ENCODE measurements at regions of chr3 and their contacts with region 1.

Region 1: GRCh38 chr3:23640475-23641146 is 165.1 kb upstream of the UBE2E1 start:
- DNase-seq: no peak
- H3K4me3 ChIP-seq: no peak overlapping the region
- H3K27ac ChIP-seq: no peak overlapping the region
- H3K4me1 ChIP-seq: no peaks in the 10 kb centered on the region
- H3K27me3 ChIP-seq: no peaks in the 10 kb centered on the region
- CTCF ChIP-seq: no peak

Region 2: GRCh38 chr3:23629181-23629893 is 11.3 kb before region 1 on chr3:
- CTCF ChIA-PET with region 1: no interaction called
- POLR2A ChIA-PET with region 1: no interaction called
- intact Hi-C with region 1: loop called (anchors 1 kb)
- DNase-seq: peak in 1 of 2 experiments; percentile 20
- H3K4me3 ChIP-seq: no peak overlapping the region
- H3K27ac ChIP-seq: peak overlapping the region; percentile 51; the same call in 1 of the 2 replicates
- H3K4me1 ChIP-seq: peaks cover 14% of the 10 kb centered on the region
- H3K27me3 ChIP-seq: no peaks in the 10 kb centered on the region
- CTCF ChIP-seq: no peak